ENCODE measurements at regions of chr19 and their contacts with region 1.

Region 1: GRCh38 chr19:35213663-35214632 is 14.6 kb downstream of the FAM187B start:
- DNase-seq: peak; percentile 95
- ATAC-seq: peak; percentile 65
- H3K4me3 ChIP-seq: peak overlapping the region in 3 of 5 experiments; percentile 4 to 28 (median 25)
- H3K4me3 Mint-ChIP-seq: peak overlapping the region; percentile 81
- H3K27ac ChIP-seq: peak overlapping the region; percentile 93 to 99
- H3K27ac Mint-ChIP-seq: peak overlapping the region; percentile 98
- H3K4me1 ChIP-seq: peaks cover 78 to 81% of the 10 kb centered on the region in 2 donors
- H3K4me1 Mint-ChIP-seq: peaks cover 70% of the 10 kb centered on the region
- H3K27me3 ChIP-seq: no peaks in the 10 kb centered on the region
- H3K27me3 Mint-ChIP-seq: no peaks in the 10 kb centered on the region
- CTCF ChIP-seq: no peak

Region 2: DNA sequence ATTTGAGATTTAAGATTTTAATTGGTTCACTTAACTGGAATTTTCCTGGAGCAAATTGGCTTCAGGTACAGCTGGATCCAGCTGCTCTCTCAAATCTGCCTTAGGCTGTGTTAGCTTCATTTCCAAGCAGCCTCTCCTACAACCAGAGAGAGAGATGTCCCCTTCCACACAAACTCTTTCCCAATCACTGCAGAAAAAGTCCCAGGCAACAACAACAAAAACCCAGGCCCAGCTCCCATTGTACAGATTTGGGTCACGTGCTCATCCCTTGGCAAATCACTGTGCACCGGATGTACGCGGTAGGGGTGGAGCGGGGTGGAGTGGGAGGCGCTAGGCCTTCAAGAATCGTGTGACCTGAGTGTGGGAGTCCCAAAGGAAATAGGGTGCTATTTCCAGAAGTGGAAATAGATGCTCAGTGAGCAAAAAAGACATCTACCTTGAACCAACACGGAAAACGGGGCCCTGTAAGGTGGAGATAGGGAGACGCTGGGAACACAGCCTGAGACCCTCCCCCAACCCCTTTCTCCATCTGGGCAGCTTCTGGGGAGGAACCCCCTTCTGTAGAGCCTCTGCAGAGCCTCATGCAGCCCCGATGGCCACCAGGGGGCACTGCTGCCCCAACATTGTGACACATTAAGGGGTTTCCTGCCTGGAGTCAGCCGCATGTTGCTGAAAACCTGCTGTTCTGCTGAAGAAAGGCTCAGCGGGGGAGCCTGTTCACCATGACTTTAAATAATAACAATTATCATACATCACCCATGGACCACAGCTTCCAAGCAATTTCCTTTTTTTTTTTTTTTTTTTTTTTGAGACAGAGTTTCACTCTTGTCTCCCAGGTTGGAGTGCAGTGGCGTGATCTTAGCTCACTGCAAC is 147.0 kb before region 1 on chr19:
- CTCF ChIA-PET with region 1: interaction called, 17 read pairs
- POLR2A ChIA-PET with region 1: interaction called, 3 read pairs
- intact Hi-C with region 1: loop called (anchors 1 kb)
- DNase-seq: peak; percentile 92
- ATAC-seq: peak; percentile 87
- H3K4me3 ChIP-seq: no peak overlapping the region
- H3K4me3 Mint-ChIP-seq: peak overlapping the region; percentile 39
- H3K27ac ChIP-seq: no peak overlapping the region
- H3K27ac Mint-ChIP-seq: peak overlapping the region; percentile 65
- H3K4me1 ChIP-seq: peaks cover 13 to 29% of the 10 kb centered on the region in 2 donors
- H3K4me1 Mint-ChIP-seq: peaks cover 29% of the 10 kb centered on the region
- H3K27me3 ChIP-seq: no peaks in the 10 kb centered on the region
- H3K27me3 Mint-ChIP-seq: no peaks in the 10 kb centered on the region
- CTCF ChIP-seq: peak; percentile 92

Region 3: DNA sequence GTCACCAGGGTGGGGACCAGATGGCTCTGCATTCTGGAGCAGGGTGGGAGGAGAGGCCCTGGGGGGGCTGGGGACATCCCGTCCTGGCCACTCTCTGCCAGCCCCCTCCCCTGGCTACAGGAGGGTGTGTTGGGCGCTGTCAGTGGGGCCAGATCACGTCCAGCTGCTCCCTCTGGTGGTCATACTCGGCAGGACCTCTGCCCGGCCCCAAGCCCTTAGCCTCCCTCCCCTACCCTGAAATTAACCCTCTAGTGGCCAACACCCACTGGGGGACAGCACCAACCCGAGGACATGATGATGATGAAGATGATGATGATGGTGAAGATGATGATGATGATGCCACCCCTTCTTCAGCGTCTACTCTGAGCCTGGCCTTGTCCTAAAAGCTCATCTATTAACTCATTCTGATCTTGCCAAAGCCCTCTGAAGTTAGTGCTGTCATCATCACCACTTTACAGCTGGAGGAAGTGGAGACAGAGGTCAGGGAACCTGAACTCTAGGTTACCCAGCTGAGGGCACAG is 78.5 kb before region 1 on chr19:
- CTCF ChIA-PET with region 1: interaction called, 10 read pairs
- POLR2A ChIA-PET with region 1: no interaction called
- intact Hi-C with region 1: no loop called
- DNase-seq: peak; percentile 79
- ATAC-seq: peak; percentile 93
- H3K4me3 ChIP-seq: no peak overlapping the region
- H3K4me3 Mint-ChIP-seq: no peak overlapping the region
- H3K27ac ChIP-seq: no peak overlapping the region
- H3K27ac Mint-ChIP-seq: peak overlapping the region; percentile 75
- H3K4me1 ChIP-seq: peaks cover 0 to 28% of the 10 kb centered on the region in 2 donors
- H3K4me1 Mint-ChIP-seq: peaks cover 21% of the 10 kb centered on the region
- H3K27me3 ChIP-seq: peaks cover 0 to 2% (median 0%) of the 10 kb centered on the region in 4 experiments
- H3K27me3 Mint-ChIP-seq: peaks cover 5% of the 10 kb centered on the region
- CTCF ChIP-seq: peak; percentile 82

Region 4: DNA sequence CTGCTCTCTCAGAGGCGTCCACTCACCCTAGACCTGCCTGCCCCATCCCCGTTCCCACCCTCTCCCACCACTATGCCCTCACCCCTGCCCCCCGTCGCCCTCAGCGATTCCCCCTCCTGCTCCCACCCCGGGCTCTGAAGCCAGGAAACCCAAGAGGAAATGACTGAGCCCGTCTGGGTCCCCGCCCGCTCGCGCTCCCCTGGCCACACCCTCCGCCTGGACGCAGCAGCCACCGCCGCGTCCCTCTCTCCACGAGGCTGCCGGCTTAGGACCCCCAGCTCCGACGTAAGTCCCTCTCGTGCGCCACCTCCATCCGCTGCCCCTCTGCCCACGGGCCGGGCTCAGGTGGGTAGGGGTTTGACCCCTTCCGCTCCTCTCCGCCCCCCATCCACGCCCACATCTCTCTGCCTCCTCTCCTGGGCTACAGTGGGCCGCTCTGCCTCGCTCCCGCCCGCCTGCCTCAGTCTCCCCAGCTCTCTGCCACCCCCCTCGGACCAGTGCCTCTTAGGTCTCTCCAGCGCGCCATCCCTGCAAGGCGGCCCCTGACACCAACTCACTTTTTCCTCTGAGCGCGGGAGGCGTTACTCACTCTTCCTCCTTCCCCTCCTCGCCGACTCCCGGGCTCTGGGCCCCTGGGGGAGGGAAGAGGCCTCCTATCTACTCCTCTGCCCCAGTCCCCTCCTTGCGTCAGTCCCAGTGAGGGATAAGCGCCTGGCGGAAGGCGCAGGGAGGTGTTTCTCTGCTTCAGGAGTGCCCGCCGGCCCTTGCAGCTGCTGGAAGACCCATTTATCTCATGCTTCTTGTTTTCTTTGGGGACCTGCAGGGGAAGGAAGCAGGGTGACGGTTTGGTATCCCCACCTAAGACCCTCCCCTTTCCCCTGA is 59.2 kb before region 1 on chr19 and contains the start of gene FXYD5:
- CTCF ChIA-PET with region 1: interaction called, 13 read pairs
- POLR2A ChIA-PET with region 1: interaction called, 18 read pairs
- intact Hi-C with region 1: loop called (anchors 2 kb)
- DNase-seq: peak; percentile 64
- ATAC-seq: peak; percentile 72
- H3K4me3 ChIP-seq: peak within 1 kb of the TSS; percentile 51 to 93 (median 90)
- H3K4me3 Mint-ChIP-seq: peak within 1 kb of the TSS; percentile 100
- H3K27ac ChIP-seq: peak within 1 kb of the TSS; percentile 43 to 85
- H3K27ac Mint-ChIP-seq: peak within 1 kb of the TSS; percentile 97
- H3K4me1 ChIP-seq: peaks cover 20 to 25% of the 10 kb centered on the region in 2 donors
- H3K4me1 Mint-ChIP-seq: peaks cover 49% of the 10 kb centered on the region
- H3K27me3 ChIP-seq: peaks cover 0 to 3% (median 0%) of the 10 kb centered on the region in 4 experiments
- H3K27me3 Mint-ChIP-seq: no peaks in the 10 kb centered on the region
- CTCF ChIP-seq: no peak
- total RNA-seq, gene FXYD5: 293 and 310 TPM in 2 replicates

Region 5: GRCh38 chr19:35236638-35237400 is 22.9 kb after region 1 on chr19:
- CTCF ChIA-PET with region 1: interaction called, 10 read pairs
- POLR2A ChIA-PET with region 1: interaction called, 10 read pairs
- intact Hi-C with region 1: no loop called
- DNase-seq: peak; percentile 43
- ATAC-seq: no peak
- H3K4me3 ChIP-seq: no peak overlapping the region
- H3K4me3 Mint-ChIP-seq: no peak overlapping the region
- H3K27ac ChIP-seq: no peak overlapping the region
- H3K27ac Mint-ChIP-seq: peak overlapping the region; percentile 8
- H3K4me1 ChIP-seq: peaks cover 13 to 18% of the 10 kb centered on the region in 2 donors
- H3K4me1 Mint-ChIP-seq: peaks cover 19% of the 10 kb centered on the region
- H3K27me3 ChIP-seq: no peaks in the 10 kb centered on the region
- H3K27me3 Mint-ChIP-seq: peaks cover 3% of the 10 kb centered on the region
- CTCF ChIP-seq: no peak

Region 6: DNA sequence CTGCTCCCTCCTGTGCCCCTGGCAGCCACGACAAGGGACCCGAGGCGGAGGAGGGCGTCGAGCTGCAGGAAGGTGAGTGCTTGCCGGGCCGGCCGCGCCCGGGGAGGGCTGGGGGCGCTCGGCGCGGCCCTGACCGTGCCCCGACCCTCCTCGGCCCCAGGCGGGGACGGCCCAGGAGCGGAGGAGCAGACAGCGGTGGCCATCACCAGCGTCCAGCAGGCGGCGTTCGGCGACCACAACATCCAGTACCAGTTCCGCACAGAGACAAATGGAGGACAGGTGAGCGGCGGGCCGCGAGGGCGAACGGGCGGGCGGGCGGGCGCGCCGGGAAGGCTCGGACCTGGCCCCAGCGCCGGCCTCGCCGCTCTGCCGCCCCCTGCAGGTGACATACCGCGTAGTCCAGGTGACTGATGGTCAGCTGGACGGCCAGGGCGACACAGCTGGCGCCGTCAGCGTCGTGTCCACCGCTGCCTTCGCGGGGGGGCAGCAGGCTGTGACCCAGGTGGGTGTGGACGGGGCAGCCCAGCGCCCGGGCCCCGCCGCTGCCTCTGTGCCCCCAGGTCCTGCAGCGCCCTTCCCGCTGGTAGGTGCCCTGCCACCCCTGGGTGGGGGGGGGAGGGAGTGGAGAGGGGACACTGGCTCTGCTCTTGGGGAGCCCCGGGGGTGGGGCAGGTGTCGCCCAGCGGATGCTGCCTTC is 55.6 kb after region 1 on chr19:
- CTCF ChIA-PET with region 1: interaction called, 4 read pairs
- POLR2A ChIA-PET with region 1: interaction called, 4 read pairs
- intact Hi-C with region 1: loop called (anchors 2 kb)
- DNase-seq: peak; percentile 92
- ATAC-seq: peak; percentile 71
- H3K4me3 ChIP-seq: peak overlapping the region in 4 of 5 experiments; percentile 24 to 62 (median 54)
- H3K4me3 Mint-ChIP-seq: peak overlapping the region; percentile 84
- H3K27ac ChIP-seq: no peak overlapping the region
- H3K27ac Mint-ChIP-seq: peak overlapping the region; percentile 87
- H3K4me1 ChIP-seq: peaks cover 39 to 57% of the 10 kb centered on the region in 2 donors
- H3K4me1 Mint-ChIP-seq: peaks cover 62% of the 10 kb centered on the region
- H3K27me3 ChIP-seq: no peaks in the 10 kb centered on the region
- H3K27me3 Mint-ChIP-seq: no peaks in the 10 kb centered on the region
- CTCF ChIP-seq: peak; percentile 77

Region 7: DNA sequence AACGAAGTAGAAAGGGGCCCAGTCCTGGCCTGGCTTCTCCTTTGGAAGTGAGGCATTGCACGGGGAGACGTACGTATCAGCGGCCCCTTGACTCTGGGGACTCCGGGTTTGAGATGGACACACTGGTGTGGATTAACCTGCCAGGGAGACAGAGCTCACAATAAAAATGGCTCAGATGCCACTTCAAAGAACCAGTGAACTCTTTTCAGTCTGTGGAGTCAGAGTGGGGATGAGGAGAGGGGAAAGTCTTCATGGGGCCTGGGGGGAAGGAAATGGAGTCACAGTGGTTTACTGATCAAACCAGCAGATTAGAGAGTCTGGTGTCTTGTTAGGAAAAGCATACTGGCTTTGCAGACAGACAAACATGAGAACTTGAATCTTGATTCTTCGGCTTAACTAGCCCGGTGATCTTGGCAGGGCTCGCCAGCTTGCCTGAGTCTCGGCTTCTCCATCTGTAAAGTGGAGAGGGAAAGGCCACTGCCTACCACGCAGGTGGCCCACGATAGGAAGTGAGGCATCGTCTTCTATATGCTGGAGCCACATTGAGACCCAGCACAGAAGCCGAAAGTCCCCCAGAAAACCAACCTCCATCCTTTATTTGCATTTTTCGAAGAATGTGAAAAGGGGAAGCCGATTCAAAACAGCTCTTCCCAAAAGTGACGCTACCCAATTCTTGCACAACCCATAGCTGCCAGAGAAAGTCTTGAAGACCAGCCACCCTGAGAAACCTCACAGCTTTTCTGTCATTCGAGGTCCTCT is 133.4 kb after region 1 on chr19 and contains the start of gene FFAR1:
- CTCF ChIA-PET with region 1: no interaction called
- POLR2A ChIA-PET with region 1: interaction called, 5 read pairs
- intact Hi-C with region 1: loop called (anchors 5 kb)
- DNase-seq: peak; percentile 93
- ATAC-seq: peak; percentile 62
- H3K4me3 ChIP-seq: peak within 1 kb of the TSS in 3 of 5 experiments; percentile 12 to 18 (median 17)
- H3K4me3 Mint-ChIP-seq: peak within 1 kb of the TSS; percentile 82
- H3K27ac ChIP-seq: peak within 1 kb of the TSS; percentile 91 to 92
- H3K27ac Mint-ChIP-seq: peak within 1 kb of the TSS; percentile 96
- H3K4me1 ChIP-seq: peaks cover 72 to 87% of the 10 kb centered on the region in 2 donors
- H3K4me1 Mint-ChIP-seq: peaks cover 75% of the 10 kb centered on the region
- H3K27me3 ChIP-seq: no peaks in the 10 kb centered on the region
- H3K27me3 Mint-ChIP-seq: no peaks in the 10 kb centered on the region
- CTCF ChIP-seq: no peak
- total RNA-seq, gene FFAR1: 3.0 and 3.3 TPM in 2 replicates

Region 8: DNA sequence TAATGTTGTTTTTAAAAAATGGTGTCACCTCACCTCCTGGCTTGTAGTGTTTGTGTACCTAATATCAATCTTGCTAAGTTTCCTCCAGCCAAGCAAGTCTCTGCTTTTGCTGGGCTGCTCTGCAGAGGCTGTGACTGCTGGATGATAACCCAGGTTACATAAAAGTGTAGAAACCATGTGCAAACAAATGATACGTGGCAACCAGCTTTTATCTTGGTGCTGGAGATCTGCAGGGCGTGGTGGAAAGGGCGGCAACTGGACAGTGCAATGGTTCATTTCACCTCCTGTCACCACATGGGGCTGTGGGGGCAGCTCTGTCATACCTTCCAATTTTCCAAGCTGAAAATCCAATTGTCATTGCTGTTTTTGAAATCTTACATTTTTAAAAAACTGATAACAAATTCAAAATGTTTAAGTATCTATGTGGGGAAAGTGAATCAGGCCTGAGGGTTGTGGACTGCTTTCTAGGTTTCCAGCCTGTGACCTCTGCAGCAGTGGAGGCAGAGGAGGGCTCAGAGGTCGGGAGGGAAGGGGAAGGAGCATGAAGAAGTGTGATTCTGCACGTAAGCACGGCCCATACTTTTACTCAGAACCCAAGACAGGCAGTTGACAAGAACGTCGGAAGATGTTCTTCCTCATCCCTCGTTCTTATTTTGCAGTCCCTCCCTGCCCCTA is 166.6 kb after region 1 on chr19:
- CTCF ChIA-PET with region 1: no interaction called
- POLR2A ChIA-PET with region 1: no interaction called
- intact Hi-C with region 1: no loop called
- DNase-seq: no peak
- ATAC-seq: no peak
- H3K4me3 ChIP-seq: no peak overlapping the region
- H3K4me3 Mint-ChIP-seq: no peak overlapping the region
- H3K27ac ChIP-seq: no peak overlapping the region
- H3K27ac Mint-ChIP-seq: no peak overlapping the region
- H3K4me1 ChIP-seq: peaks cover 11 to 14% of the 10 kb centered on the region in 2 donors
- H3K4me1 Mint-ChIP-seq: peaks cover 16% of the 10 kb centered on the region
- H3K27me3 ChIP-seq: peaks cover 0 to 2% (median 0%) of the 10 kb centered on the region in 4 experiments
- H3K27me3 Mint-ChIP-seq: peaks cover 13% of the 10 kb centered on the region
- CTCF ChIP-seq: no peak

Measured in B cell (primary cell).